Endothelial cell of umbilical vein (primary cell): ENCODE measurements at regions of chr3 and their contacts with region 1.

Region 1: DNA sequence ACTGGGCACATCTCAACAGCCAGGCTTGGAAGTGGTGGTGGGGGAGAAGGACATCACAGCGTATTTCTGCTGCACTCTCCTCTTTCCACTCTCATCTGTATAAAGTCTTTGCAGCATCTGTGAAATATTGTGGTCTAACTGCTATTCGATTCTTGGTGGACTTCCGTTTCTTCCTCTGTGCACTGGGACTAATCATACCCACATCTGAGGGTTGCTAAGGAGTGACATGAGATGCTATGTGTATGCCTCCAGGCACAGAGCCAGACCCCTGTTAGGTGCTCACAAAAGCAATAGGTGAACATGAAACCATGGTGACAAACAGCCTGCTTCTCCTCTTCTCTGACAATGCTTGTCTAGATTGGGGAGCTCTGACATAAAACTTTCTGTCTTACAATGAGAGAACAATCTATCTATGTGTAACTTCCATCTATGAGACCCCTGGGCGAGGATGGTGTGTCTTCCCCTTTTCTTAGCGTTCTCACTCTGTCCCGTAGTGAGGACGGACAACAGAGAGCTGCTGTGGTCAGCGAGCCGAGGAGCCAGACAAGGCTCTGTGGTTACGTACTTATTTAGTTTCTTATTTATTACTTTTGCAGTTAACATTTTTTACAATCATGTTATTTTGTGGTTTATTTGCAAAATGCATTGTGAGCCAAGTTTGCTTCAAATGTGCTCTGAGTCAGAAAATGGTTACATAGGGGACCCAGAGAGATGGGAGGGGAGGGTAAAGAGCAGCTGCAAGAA is 196.7 kb upstream of the TPRG1 start:
- DNase-seq: no peak
- H3K4me3 ChIP-seq: no peak overlapping the region
- H3K27ac ChIP-seq: no peak overlapping the region
- H3K4me1 ChIP-seq: no peaks in the 10 kb centered on the region
- H3K27me3 ChIP-seq: peaks cover 10 to 20% of the 10 kb centered on the region in 2 experiments
- CTCF ChIP-seq: no peak
- POLR2A ChIP-seq: no peak

Region 2: GRCh38 chr3:188962253-188963247 is 12.5 kb before region 1 on chr3:
- CTCF ChIA-PET with region 1: no interaction called
- POLR2A ChIA-PET with region 1: no interaction called
- dilution Hi-C with region 1: no loop called
- intact Hi-C with region 1: no loop called
- DNase-seq: no peak
- H3K4me3 ChIP-seq: no peak overlapping the region
- H3K27ac ChIP-seq: no peak overlapping the region
- H3K4me1 ChIP-seq: no peaks in the 10 kb centered on the region
- H3K27me3 ChIP-seq: peaks cover 0 to 4% of the 10 kb centered on the region in 2 experiments
- CTCF ChIP-seq: no peak
- POLR2A ChIP-seq: no peak

Region 3: GRCh38 chr3:189084620-189085019 is 109.6 kb after region 1 on chr3:
- CTCF ChIA-PET with region 1: no interaction called
- POLR2A ChIA-PET with region 1: no interaction called
- dilution Hi-C with region 1: no loop called
- intact Hi-C with region 1: no loop called
- DNase-seq: no peak
- H3K4me3 ChIP-seq: no peak overlapping the region
- H3K27ac ChIP-seq: no peak overlapping the region
- H3K4me1 ChIP-seq: no peaks in the 10 kb centered on the region
- H3K27me3 ChIP-seq: no peaks in the 10 kb centered on the region
- CTCF ChIP-seq: no peak
- POLR2A ChIP-seq: no peak

Region 4: GRCh38 chr3:189148081-189148507 is 173.1 kb after region 1 on chr3:
- CTCF ChIA-PET with region 1: no interaction called
- POLR2A ChIA-PET with region 1: no interaction called
- dilution Hi-C with region 1: no loop called
- intact Hi-C with region 1: loop called (anchors 1 kb)
- DNase-seq: peak; percentile 71
- H3K4me3 ChIP-seq: no peak overlapping the region
- H3K27ac ChIP-seq: no peak overlapping the region
- H3K4me1 ChIP-seq: no peaks in the 10 kb centered on the region
- H3K27me3 ChIP-seq: peaks cover 5 to 8% of the 10 kb centered on the region in 2 experiments
- CTCF ChIP-seq: peak; percentile 61 to 70
- POLR2A ChIP-seq: no peak